ENCODE measurements at regions of chr10 and their contacts with region 1.

Region 1: GRCh38 chr10:4639960-4640359 is 186.0 kb upstream of the AKR1E2 start:
- DNase-seq: peak in 1 of 2 donors; percentile 21
- ATAC-seq: peak; percentile 49 to 95 (median 86)
- H3K4me3 ChIP-seq: no peak overlapping the region
- H3K27ac ChIP-seq: peak overlapping the region; percentile 15 to 80 (median 58)
- H3K4me1 ChIP-seq: peaks cover 0 to 21% (median 15%) of the 10 kb centered on the region in 9 donors
- H3K27me3 ChIP-seq: no peaks in the 10 kb centered on the region
- CTCF ChIP-seq: no peak

Region 2: GRCh38 chr10:4581929-4582328 is 58.0 kb before region 1 on chr10:
- intact Hi-C with region 1: loop called in 1 of 10 experiments (anchors 2 kb)
- DNase-seq: no peak
- ATAC-seq: no peak
- H3K4me3 ChIP-seq: no peak overlapping the region
- H3K27ac ChIP-seq: no peak overlapping the region
- H3K4me1 ChIP-seq: no peaks in the 10 kb centered on the region
- H3K27me3 ChIP-seq: no peaks in the 10 kb centered on the region
- CTCF ChIP-seq: no peak

Measured in heart right ventricle (tissue), 16 donors.